Activated B cell treated with CpG ODN at 0.5 μM for 24 hours (primary cell): ENCODE measurements at regions of chr5 and their contacts with region 1.

Region 1: DNA sequence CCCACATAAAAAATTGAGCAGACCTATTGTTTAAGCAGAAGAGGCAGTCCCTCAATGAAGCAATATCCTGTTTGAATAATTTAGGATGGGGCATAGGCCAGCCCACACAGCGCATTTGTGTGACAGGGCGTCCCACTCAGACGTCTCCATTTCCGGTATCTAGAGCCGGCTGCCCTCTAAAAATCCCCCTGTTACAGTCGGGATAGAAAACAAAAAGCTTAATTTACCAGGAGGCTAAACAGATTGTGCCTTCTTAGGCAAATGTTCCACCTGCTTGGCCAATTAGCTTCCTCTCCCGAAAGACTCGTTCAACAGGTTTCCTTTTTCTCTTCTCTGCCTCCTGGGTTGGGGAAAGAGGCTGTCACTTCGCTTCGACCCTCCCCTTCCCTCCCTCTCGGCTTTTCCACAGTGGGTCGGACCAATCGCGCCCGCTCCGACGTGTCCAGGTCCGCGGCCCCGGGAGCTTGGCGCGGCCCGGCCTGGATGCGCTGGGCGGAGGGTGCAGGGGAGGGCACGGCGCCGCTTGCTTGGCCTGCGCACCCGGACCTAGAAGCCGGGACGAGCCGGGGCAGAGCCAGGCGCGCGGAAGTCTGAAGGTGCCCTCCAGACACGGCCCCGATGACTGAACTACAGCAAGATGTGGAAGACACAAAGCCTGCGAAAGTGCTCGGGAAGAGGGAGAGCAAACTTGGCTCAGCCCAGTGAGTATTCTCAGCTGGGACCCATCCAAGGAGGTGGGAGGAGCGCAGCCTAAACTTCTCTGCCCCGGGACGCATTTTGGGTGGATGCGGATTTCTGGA is at the start of gene GRAMD2B:
- DNase-seq: peak; percentile 53
- ATAC-seq: peak; percentile 86
- H3K4me3 Mint-ChIP-seq: peak within 1 kb of the TSS; percentile 88
- H3K27ac Mint-ChIP-seq: peak within 1 kb of the TSS; percentile 76
- H3K4me1 Mint-ChIP-seq: peaks cover 26% of the 10 kb centered on the region
- H3K27me3 Mint-ChIP-seq: no peaks in the 10 kb centered on the region
- CTCF ChIP-seq: no peak
- total RNA-seq, gene GRAMD2B: 4.9 and 5.9 TPM in 2 replicates

Region 2: GRCh38 chr5:126354012-126354857 is 69.0 kb before region 1 on chr5:
- CTCF ChIA-PET with region 1: no interaction called
- POLR2A ChIA-PET with region 1: no interaction called
- intact Hi-C with region 1: no loop called
- DNase-seq: no peak
- ATAC-seq: peak; percentile 42
- H3K4me3 Mint-ChIP-seq: no peak overlapping the region
- H3K27ac Mint-ChIP-seq: no peak overlapping the region
- H3K4me1 Mint-ChIP-seq: peaks cover 4% of the 10 kb centered on the region
- H3K27me3 Mint-ChIP-seq: peaks cover 21% of the 10 kb centered on the region
- CTCF ChIP-seq: no peak

Region 3: GRCh38 chr5:126449751-126450271 is 26.6 kb after region 1 on chr5:
- CTCF ChIA-PET with region 1: no interaction called
- POLR2A ChIA-PET with region 1: no interaction called
- intact Hi-C with region 1: loop called (anchors 2 kb)
- DNase-seq: no peak
- ATAC-seq: peak; percentile 83
- H3K4me3 Mint-ChIP-seq: peak overlapping the region; percentile 77
- H3K27ac Mint-ChIP-seq: peak overlapping the region; percentile 84
- H3K4me1 Mint-ChIP-seq: peaks cover 17% of the 10 kb centered on the region
- H3K27me3 Mint-ChIP-seq: no peaks in the 10 kb centered on the region
- CTCF ChIP-seq: no peak